ENCODE measurements at regions of chr4 and their contacts with region 1.

Region 1: GRCh38 chr4:64539234-64539849 is 130.1 kb upstream of the TECRL start:
- DNase-seq: peak; percentile 16
- ATAC-seq: no peak
- H3K4me3 ChIP-seq: no peak overlapping the region
- H3K27ac ChIP-seq: no peak overlapping the region
- H3K4me1 ChIP-seq: no peaks in the 10 kb centered on the region
- H3K27me3 ChIP-seq: no peaks in the 10 kb centered on the region
- CTCF ChIP-seq: peak in 2 of 3 experiments; percentile 56 to 58; a peak in 4 of 6 replicates
- POLR2A ChIP-seq: no peak
- RAD21 ChIP-seq: peak; percentile 42

Region 2: DNA sequence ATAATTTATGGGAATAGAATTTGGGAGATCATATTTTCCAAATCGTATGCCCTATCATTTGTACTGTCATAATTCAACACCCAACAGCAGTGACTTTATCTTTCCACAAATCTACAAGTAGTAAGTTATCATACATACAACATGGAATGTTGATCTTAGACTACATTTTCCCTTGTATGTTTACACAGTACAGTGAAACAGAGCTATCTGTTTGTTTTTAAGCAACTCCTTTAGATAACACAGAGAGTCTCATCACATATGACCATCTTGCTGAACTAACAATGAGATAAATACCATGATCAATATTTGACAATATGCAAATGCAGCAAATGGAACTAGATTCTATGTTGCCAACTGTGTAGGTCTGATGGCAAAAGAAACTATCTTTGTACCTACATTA is 376.3 kb before region 1 on chr4:
- CTCF ChIA-PET with region 1: interaction called, 7 read pairs
- POLR2A ChIA-PET with region 1: no interaction called
- RAD21 ChIA-PET with region 1: no interaction called
- intact Hi-C with region 1: loop called (anchors 5 kb)
- DNase-seq: no peak
- ATAC-seq: no peak
- H3K4me3 ChIP-seq: no peak overlapping the region
- H3K27ac ChIP-seq: no peak overlapping the region
- H3K4me1 ChIP-seq: no peaks in the 10 kb centered on the region
- H3K27me3 ChIP-seq: no peaks in the 10 kb centered on the region
- CTCF ChIP-seq: no peak
- POLR2A ChIP-seq: no peak
- RAD21 ChIP-seq: no peak

Measured in HCT116 (cell line).